ENCODE measurements at regions of chr17 and their contacts with region 1.

Region 1: DNA sequence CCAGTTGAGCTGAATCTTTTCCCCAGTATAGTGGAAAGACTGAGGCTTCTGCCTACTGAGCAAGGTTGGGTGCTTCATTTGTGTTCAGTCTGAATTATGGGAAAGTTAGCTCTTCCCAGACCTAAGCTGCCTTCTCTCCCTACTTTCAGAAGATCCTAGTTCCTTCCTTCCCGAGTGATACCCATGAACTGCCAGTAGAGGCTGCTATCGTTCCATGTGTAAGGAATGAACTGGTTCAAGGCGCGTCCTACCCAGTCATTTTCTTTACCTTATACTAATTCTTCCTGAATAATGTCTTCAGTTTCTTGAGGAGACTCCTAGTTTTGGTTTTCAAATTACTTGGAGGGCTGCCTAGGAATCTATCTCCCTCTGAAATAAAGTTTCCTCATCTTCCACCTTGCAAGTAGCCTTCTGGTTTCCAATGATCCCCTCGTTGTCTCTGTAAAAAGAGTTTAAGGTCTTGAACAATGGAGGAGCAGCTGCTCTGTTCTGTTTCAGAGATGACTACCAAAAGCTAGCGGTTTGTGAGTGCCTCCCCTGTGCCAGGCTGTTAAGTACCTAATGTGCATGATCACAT is 934 bp upstream of the AOC2 start:
- DNase-seq: no peak
- H3K4me3 ChIP-seq: no peak overlapping the region
- H3K27ac ChIP-seq: peak overlapping the region; percentile 29 to 55 (median 44)
- H3K4me1 ChIP-seq: peaks cover 0 to 4% (median 0%) of the 10 kb centered on the region in 4 donors
- H3K27me3 ChIP-seq: no peaks in the 10 kb centered on the region
- CTCF ChIP-seq: peak; percentile 89 to 96 (median 94)
- EP300 ChIP-seq: no peak
- POLR2A ChIP-seq: no peak

Region 2: GRCh38 chr17:42577532-42578281 is 265.7 kb before region 1 on chr17 and contains the start of gene PSMC3IP:
- intact Hi-C with region 1: no loop called
- DNase-seq: peak; percentile 98
- H3K4me3 ChIP-seq: peak within 1 kb of the TSS; percentile 46 to 68 (median 60)
- H3K27ac ChIP-seq: peak within 1 kb of the TSS; percentile 88 to 93 (median 90)
- H3K4me1 ChIP-seq: peaks cover 0 to 22% (median 21%) of the 10 kb centered on the region in 4 donors
- H3K27me3 ChIP-seq: no peaks in the 10 kb centered on the region
- CTCF ChIP-seq: no peak
- EP300 ChIP-seq: peak in 1 of 4 donors; percentile 11
- POLR2A ChIP-seq: peak; percentile 75 to 81
- total RNA-seq, gene PSMC3IP: 4.6 to 10.3 (median 5.7) TPM

Region 3: GRCh38 chr17:42928714-42929496 is 85.5 kb after region 1 on chr17:
- intact Hi-C with region 1: loop called (anchors 2 kb)
- DNase-seq: peak; percentile 69
- H3K4me3 ChIP-seq: no peak overlapping the region
- H3K27ac ChIP-seq: peak overlapping the region; percentile 71 to 80 (median 76)
- H3K4me1 ChIP-seq: peaks cover 0 to 10% (median 6%) of the 10 kb centered on the region in 4 donors
- H3K27me3 ChIP-seq: no peaks in the 10 kb centered on the region
- CTCF ChIP-seq: peak; percentile 32 to 67 (median 60)
- EP300 ChIP-seq: no peak
- POLR2A ChIP-seq: no peak

Region 4: DNA sequence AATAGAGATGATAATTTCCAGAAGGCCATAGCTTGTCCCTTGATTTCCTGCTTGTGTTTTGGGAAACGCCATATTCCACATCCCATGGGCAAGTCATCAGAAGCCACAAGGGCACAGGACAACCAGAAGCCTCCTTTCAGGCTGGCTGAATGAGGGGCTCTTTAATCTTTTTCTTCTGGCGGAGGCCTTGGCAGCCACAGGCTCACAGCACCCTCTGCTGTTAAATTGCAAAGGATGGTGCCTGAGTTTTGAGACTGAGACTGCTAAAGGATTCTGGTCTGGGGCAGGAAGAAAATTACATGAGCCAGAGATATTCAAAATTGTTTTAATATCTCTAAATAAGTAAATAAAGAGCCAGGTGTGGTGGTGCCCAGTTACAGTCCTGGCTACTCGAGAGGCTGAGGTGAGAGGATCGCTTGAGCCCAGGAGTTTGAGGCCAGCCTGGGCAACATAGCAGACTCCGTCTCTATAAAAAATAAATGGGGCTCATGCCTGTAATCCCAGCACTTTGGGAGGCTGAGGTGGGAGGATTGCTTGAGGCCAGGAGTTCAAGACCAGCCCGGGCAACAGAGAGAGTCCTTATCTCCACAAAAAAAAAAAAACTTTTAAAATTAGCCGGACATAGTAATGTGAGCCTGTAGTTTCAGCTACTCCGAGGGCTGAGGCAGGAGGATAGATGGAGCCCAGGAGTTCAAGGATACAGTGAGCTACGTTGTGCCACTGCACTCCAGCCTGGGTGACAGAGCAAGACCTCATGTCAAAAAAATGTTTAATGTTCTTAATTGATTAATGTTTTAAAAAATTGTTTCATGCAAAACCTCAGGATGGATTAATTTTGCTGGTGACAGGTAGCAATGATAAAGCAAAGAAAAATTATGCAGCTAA is 94.5 kb after region 1 on chr17:
- intact Hi-C with region 1: loop called (anchors 1 kb)
- DNase-seq: peak; percentile 71
- H3K4me3 ChIP-seq: no peak overlapping the region
- H3K27ac ChIP-seq: no peak overlapping the region
- H3K4me1 ChIP-seq: no peaks in the 10 kb centered on the region
- H3K27me3 ChIP-seq: no peaks in the 10 kb centered on the region
- CTCF ChIP-seq: peak in 3 of 4 experiments; percentile 59 to 66 (median 63)
- EP300 ChIP-seq: no peak
- POLR2A ChIP-seq: no peak

Region 5: GRCh38 chr17:42997984-42998938 is 154.8 kb after region 1 on chr17 and contains the start of gene RPL27:
- intact Hi-C with region 1: loop called (anchors 5 kb)
- DNase-seq: peak; percentile 100
- H3K4me3 ChIP-seq: peak within 1 kb of the TSS; percentile 66 to 88 (median 79)
- H3K27ac ChIP-seq: peak within 1 kb of the TSS; percentile 93 to 97 (median 94)
- H3K4me1 ChIP-seq: peaks cover 0 to 22% (median 22%) of the 10 kb centered on the region in 4 donors
- H3K27me3 ChIP-seq: no peaks in the 10 kb centered on the region
- CTCF ChIP-seq: peak; percentile 80 to 98 (median 87)
- EP300 ChIP-seq: peak in 2 of 4 donors; percentile 42 to 85
- POLR2A ChIP-seq: peak; percentile 75 to 88
- total RNA-seq, gene RPL27: 1,576 to 2,828 (median 2,217) TPM

Measured in sigmoid colon (tissue), 7 donors.